Right ventricle myocardium inferior (tissue), 1 donor: ENCODE measurements at regions of chr17 and their contacts with region 1.

Region 1: GRCh38 chr17:70168977-70169708 is at the start of gene KCNJ2:
- DNase-seq: peak; percentile 97
- ATAC-seq: peak; percentile 95
- total RNA-seq, gene KCNJ2: 44.3 TPM

Region 2: DNA sequence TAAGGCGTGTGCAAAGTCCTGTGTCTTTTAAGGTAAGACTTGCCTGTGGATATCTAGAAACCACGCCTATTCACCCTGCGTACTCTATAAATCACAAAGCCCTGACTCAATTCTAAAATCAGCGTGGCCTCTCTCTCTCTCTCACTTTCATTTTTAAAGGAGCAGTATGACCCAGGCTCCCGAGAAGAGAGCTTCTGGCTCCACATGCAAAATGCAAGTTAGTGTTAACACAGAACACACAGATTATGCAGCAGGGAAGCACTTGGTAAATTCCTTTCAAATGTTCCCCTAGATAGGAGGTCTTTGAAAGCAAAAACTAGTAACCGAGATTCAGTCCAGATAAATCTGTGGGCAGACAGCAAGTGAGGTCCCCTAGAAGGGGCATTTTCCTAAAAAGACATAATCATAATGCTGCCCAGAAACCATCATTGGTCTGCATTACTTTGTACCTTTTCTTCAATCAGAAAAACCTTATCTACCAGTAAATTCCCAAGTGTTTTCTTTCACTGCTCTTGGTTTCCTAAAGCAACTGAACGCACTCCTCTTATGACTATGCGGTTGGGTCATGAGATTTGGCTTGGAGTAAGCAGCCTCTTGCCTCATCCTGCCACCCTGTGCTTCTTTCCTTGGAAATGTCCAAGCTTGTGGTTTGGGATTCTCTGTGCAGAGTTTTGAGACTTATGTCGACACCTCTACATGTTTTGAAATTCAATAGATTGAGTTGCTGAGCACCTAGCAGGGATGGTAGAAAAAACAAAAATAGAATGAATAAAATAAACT is 31.5 kb before region 1 on chr17:
- intact Hi-C with region 1: loop called (anchors 1 kb)
- DNase-seq: no peak
- ATAC-seq: peak; percentile 96

Region 3: DNA sequence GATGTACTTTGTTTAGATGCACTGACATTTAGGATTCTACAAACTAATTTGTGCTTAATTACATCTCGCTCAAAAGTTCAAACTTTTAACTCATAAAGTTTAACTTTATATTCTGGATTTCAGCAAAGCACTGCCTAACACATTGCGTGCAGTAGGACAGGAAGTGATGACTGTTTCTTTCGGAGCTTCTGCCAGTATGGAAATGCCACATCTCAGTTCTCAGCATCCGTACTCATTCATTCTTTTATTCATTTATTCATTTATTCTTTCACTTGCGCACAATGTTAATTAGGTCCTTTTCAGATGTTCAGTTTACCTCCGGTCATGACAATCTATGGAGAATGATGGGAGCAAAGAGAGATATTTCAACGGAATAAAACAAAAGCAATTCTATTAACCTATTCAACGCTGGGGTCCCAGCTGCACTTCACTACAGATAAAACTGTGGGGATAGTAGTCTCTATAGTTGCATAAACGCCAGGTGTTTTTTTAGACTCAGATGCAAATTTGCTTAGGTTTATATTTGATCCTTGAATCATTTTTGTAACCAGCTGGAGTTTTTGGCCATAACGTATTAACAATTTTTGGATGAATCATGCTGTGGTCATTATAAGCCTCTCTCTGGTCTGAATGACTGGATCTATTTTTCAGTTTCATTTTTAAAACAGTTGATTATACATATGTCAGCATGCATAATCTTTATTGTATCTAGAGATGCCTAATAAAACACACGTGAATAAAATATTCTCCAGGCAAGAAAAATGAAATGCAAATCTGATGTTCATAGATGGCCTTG is 144.1 kb after region 1 on chr17:
- intact Hi-C with region 1: loop called (anchors 2 kb)
- DNase-seq: no peak
- ATAC-seq: no peak

Region 4: DNA sequence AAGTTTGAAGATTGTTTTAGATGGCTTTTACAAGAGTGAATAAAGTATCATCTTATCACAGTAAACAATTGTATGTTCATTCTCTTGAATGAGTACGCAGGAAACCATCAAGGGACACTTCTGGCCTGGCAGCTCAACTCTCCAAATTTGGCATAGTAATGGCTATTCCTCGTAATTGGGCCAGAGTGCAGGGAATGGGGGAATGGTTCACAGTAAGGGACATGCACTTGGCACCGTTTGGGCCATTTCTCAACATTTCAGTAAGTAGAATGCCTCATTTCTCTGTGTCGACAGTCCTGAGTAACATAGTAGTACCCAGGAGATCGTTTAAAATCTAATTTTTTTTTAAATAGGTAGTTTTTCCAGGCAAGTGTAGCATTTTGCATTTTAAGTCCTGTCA is 309.8 kb after region 1 on chr17:
- intact Hi-C with region 1: loop called (anchors 10 kb)
- DNase-seq: no peak
- ATAC-seq: peak; percentile 85

Region 5: DNA sequence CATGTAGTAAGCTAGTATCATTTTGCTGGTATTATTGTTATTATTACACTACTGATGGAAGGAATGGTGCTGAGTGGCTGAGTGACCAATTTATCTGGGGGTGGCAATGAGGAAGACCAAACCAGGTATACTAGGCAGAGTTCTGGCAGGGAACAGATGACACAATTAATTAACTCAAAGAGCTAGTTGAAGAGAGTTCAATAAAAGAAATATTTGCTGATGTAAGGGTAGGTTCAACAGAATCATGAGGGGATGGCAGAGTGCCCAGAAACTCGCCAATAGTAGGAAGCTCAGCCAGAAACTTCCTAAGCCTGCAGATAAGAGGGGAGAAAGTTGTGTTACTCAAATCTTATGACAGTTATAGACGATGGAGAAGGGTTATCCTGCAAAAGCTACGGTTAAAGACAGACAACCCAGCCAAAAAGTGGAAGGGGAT is 352.7 kb after region 1 on chr17:
- intact Hi-C with region 1: loop called (anchors 5 kb)
- DNase-seq: peak; percentile 70
- ATAC-seq: peak; percentile 88

Region 6: GRCh38 chr17:70552230-70552981 is 383.3 kb after region 1 on chr17:
- intact Hi-C with region 1: loop called (anchors 5 kb)
- DNase-seq: no peak
- ATAC-seq: peak; percentile 69

Region 7: DNA sequence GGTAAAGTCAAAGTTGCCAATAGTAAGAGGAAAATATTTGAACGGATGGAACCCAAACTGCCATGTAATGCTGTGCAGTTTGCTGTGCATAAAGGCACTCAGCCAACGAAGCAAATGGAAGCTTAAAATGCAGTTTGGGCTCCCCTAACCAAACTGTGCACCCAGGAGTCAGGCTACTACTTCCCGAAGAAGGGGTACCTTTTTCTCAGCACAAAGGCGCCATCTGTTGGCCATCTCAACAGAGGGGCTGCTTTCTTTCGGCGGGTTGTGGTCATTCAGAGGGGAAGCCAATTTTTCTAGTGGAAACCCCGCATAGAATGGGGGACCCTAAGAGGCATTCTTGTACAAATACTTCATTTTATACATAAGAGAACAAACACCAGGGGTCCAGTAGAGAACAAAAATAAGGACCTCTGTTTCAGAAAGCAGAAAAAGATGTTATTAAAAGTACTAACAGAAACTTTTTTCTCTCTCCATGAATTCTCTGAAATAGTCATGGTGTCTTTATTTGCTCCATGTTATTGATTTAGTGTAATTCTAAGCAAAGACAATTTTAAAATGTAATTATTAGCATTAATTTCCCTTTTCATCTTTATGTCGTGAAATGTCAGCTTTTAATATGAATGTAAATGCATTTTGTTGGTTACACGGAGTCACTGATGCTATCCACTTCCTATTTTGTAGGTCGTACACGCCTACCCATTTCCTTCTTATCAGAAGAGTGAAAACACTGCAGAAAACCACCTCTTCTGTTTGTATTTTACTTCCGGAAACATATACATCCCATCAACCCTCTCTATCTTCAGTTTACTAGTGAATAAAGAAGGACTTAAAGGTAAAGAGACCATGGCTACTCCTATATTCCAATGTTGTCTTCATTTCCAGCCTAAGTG is 453.5 kb after region 1 on chr17:
- intact Hi-C with region 1: loop called (anchors 10 kb)
- DNase-seq: no peak
- ATAC-seq: peak; percentile 72

Region 8: DNA sequence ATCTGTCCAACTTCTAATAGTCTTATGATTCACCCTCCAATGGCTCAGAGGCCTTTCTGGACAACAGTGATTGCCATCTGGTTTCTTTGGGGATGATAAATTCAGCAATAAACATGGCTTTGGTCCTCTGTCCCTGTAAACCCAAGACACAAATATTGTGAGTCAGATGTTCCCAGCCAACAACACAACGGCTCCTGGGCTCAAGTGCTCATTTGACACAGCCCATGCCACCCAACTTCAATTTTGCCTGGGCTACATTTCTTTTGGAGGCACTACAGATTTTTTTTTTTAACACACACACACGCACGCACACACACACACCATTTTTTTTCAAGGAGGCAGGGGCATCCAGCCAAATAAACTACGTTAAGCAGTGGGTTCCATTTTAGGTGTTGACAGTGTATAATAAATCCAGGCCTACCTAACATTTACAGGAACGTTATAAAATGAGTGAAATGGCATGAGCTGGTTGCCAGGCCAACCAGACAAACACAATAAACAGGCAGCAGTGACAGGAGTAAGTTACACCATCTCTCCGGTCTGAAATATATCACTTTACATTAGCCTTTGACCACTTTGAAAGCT is 1011.8 kb after region 1 on chr17:
- intact Hi-C with region 1: no loop called
- DNase-seq: no peak
- ATAC-seq: no peak